Activated T-helper 1 cell treated with anti-CD3 and anti-CD28 coated beads, Interleukin-12 subunit alpha, Interleukin-12 subunit beta, Interleukin-2, Interleukin-4 antibody, amounts not matched to agents 30 ng/mL and 10 ng/mL and 1 ng/mL, durations not matched to agents 14 hours and 24 hours and 36 hours (primary cell): ENCODE measurements at regions of chr1 and their contacts with region 1.

Region 1: GRCh38 chr1:27979151-27979858 is 19.5 kb downstream of the XKR8 start:
- DNase-seq: no peak
- H3K4me3 Mint-ChIP-seq: no peak overlapping the region
- H3K27ac Mint-ChIP-seq: no peak overlapping the region
- H3K4me1 Mint-ChIP-seq: no peaks in the 10 kb centered on the region
- H3K27me3 Mint-ChIP-seq: no peaks in the 10 kb centered on the region

Region 2: DNA sequence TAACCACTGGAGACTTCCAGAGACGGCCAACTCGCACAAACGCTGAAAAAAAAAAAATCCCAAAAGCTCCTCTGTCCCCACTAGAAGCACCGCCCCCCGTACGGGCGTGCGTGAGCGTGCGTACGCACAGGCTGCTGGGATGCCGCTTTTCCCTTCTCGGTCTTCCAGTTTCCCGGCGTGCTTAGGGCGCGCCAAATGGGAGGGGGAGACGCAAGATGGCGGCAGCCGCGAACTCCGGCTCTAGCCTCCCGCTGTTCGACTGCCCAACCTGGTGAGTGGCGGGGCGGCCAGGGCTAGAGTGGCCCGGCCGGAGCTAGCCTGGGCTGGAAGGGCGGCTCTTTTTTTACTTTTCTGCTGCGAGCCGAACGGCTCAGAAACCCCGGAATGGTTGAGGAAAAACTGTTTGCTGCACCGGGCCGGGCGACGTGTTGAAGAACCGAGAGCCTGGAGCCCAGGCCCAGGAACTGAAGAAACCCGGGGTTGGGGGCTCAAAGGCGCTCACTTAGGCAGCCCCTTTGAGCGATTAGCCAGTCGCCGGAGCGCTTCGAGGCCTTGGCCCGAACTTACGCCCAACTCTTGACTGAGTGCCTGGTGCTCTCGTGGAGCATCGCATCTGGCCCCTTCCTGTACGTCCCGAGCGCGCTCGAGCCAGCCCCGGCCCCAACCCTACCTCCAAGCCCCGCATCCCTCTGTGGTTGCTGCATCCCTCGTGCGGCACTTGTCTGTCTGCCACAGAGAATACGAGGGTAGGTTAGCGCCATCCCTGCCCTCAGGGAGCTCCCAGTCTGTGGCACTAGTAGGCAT is 148.5 kb before region 1 on chr1 and contains the start of gene PPP1R8:
- intact Hi-C with region 1: loop called (anchors 1 kb)
- DNase-seq: peak; percentile 86
- H3K4me3 Mint-ChIP-seq: peak within 1 kb of the TSS; percentile 93
- H3K27ac Mint-ChIP-seq: peak within 1 kb of the TSS; percentile 84
- H3K4me1 Mint-ChIP-seq: peaks cover 17% of the 10 kb centered on the region
- H3K27me3 Mint-ChIP-seq: no peaks in the 10 kb centered on the region
- total RNA-seq, gene PPP1R8: 84.1 and 88.1 TPM in 2 replicates

Region 3: DNA sequence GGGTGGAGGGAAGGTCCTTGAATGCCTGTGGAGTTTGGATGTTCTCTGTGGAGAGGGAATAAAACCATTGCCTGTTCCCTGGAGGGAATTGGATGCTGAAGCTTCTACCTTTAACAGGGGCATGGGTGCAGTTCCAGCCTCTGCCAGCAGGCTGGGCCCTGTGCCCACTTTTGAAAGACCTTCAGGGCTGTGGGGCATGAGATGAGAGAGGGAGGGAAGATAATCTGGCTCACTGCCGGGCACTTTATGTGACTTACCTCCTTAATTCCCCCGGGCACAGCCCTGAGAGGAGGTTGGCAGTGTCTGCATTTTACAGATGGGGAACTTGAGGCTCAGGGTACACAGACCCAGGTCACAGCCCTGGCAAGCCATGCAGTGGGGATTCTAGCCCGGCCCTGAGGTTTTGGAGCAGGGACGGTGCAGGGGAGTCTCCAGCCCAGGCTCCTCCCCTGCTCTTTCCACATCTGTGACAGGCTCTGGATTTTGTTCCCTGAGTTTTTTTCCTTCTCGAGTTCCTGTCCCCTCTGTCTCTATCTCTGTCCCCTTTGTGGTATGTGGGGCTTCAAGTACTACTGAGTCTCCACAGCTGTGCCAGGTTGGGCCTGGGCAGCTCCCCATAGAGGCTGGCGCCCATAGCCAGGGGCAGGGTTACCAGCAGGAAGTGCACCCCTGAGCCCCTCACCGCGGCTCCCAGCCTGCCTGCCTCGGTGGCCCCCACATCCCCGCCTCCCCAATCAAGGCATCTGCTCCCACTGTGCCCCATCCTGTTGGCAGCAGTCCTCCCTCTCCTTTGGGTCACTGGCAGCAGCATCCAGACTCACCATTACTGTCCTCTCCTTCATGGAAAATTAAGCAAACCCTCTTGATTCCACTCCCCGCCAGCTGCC is 121.0 kb before region 1 on chr1:
- intact Hi-C with region 1: loop called (anchors 1 kb)
- DNase-seq: peak; percentile 72
- H3K4me3 Mint-ChIP-seq: no peak overlapping the region
- H3K27ac Mint-ChIP-seq: no peak overlapping the region
- H3K4me1 Mint-ChIP-seq: peaks cover 27% of the 10 kb centered on the region
- H3K27me3 Mint-ChIP-seq: no peaks in the 10 kb centered on the region

Region 4: DNA sequence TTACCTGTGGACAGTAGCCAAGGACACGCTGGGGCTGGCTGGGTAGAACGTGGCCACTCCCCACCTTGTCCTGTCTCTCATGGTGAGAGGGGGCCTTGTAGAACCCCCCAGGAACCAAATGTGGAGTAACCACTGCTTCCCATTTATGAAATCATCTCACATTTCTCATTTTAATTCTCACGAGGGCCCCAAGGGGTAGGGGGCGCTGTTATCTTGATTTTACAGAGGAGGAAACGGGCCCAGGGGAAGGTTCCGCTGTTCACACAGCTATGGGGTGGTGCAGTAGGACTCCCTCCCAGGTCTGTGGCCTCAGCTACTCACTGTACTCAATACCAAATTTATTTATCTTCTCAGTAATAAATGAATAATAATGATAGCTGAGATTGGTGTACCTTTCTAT is 39.0 kb before region 1 on chr1:
- intact Hi-C with region 1: loop called (anchors 1 kb)
- DNase-seq: peak; percentile 53
- H3K4me3 Mint-ChIP-seq: no peak overlapping the region
- H3K27ac Mint-ChIP-seq: peak overlapping the region; percentile 61
- H3K4me1 Mint-ChIP-seq: peaks cover 50% of the 10 kb centered on the region
- H3K27me3 Mint-ChIP-seq: peaks cover 6% of the 10 kb centered on the region

Region 5: GRCh38 chr1:29758781-29759499 is 1779.6 kb after region 1 on chr1:
- intact Hi-C with region 1: no loop called
- DNase-seq: no peak
- H3K4me3 Mint-ChIP-seq: no peak overlapping the region
- H3K27ac Mint-ChIP-seq: no peak overlapping the region
- H3K4me1 Mint-ChIP-seq: no peaks in the 10 kb centered on the region
- H3K27me3 Mint-ChIP-seq: peaks cover 9% of the 10 kb centered on the region